Dorsolateral prefrontal cortex (tissue), 120 donors: ENCODE measurements at regions of chr18 and their contacts with region 1.

Region 1: DNA sequence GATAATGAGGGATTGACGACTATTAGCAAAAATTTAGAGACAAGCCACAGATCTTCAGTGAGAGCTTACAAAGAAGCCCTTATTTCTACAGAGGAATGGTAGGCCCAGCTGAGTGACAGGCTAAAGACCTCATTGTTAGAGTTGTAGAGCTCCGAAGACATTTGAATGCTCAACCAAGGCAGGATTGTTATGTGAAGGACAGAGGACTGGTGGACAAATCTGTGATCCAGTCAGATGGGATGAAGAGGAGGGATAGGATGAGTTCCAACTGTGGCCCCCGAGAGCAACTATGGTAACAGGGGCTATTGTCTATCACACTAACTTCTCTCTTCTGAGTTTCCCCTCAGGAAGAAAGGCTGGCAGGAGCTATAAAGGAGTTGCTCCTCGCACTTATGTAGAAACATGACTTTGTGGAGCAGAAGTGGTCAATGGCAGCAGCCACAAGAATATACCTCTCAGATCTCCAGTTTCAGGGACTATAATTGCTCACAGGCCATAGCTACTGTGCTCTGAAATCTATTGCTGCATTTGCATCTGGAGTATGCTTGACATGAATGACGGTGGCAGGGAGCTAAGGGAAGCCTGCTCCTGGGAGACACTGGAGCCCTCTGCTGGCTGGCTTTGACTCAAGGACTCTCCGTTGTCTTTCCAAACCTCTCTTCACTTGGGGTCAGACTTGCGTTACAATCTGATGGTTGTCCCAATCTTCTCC is 50.3 kb upstream of the GREB1L start:
- DNase-seq: peak; percentile 10 to 85 (median 68)
- H3K4me3 ChIP-seq: peak overlapping the region in 12 of 59 donors; percentile 1 to 40 (median 22)
- H3K27ac ChIP-seq: peak overlapping the region in 56 of 59 donors; percentile 25 to 94 (median 82)
- H3K27me3 ChIP-seq: no peaks in the 10 kb centered on the region
- CTCF ChIP-seq: peak in 55 of 56 donors; percentile 21 to 79 (median 62)

Region 2: DNA sequence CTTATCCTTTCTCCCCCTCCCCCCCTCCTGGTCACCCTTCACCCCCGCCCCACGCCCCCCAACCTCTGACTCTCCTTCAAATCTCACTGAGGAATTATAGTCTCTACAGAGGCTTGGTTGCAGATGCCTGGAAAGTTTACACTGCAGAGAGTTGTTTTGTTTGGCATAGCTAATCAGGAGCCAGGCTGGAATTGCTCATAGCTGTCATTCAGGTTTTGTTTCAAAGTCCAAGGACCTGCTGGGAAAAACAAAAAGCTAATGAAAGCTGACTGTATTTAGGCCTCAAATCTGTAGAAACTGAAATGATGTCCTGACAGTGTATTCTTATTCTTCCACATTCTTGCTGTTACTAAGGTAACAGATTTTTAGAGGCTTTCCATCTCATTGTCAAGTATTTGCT is 72.9 kb after region 1 on chr18:
- intact Hi-C with region 1: loop called in 1 of 2 experiments (anchors 2 kb)
- DNase-seq: no peak
- H3K4me3 ChIP-seq: peak overlapping the region in 1 of 59 donors; percentile 6
- H3K27ac ChIP-seq: peak overlapping the region in 22 of 59 donors; percentile 10 to 82 (median 40)
- H3K27me3 ChIP-seq: peaks cover 0 to 4% (median 0%) of the 10 kb centered on the region in 45 donors
- CTCF ChIP-seq: no peak

Region 3: GRCh38 chr18:21444465-21445023 is 252.8 kb after region 1 on chr18:
- intact Hi-C with region 1: loop called (anchors 1 to 2 kb)
- DNase-seq: peak in 2 of 10 donors; percentile 28 to 33
- H3K4me3 ChIP-seq: no peak overlapping the region
- H3K27ac ChIP-seq: no peak overlapping the region
- H3K27me3 ChIP-seq: peaks cover 0 to 5% (median 0%) of the 10 kb centered on the region in 45 donors
- CTCF ChIP-seq: peak; percentile 35 to 88 (median 71)

Region 4: DNA sequence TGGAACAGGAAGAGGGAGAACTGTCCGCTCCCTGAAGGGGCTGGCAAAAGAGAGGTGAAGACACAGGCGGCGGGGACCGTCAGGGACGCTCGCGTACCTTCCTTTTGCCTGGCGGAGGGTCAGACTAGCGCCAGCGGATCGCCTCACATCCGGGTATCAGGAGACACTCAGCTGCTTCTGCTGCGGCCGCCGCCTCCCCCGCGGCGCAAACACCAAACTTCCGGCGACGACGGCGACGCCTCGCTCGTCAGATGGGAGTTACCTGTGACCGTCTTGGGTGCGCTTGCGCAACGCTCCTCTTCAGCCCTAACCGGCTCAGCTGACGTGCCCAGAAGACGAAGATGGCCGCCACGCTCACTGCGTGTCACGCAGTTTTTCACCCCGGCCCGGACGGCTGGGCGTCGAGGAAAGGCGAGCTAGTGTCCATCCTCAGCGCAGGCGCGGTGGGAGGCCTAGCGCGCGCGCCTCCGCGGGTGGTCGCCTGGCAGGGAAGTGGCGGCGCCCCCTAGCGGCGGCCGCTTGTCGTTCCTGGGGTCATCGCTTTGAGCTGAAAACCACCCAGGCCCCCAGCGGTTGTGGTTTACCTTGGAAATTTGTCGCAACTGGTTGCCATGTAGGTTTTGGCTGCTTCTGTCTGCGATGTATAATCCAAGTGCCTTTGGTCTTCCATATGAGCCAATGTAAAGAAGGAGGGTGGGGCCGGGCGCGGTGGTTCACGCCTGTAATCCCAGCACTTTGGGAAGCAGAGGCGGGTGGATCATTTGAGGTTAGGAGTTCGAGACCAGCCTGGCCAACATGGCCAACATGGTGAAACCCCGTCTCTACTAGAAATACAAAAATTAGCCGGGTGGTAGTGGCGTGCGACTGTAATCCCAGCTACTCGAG is 409.0 kb after region 1 on chr18 and contains the start of gene ESCO1:
- intact Hi-C with region 1: loop called in 1 of 2 experiments (anchors 5 kb)
- DNase-seq: peak; percentile 81 to 96 (median 91)
- H3K4me3 ChIP-seq: peak within 1 kb of the TSS; percentile 63 to 100 (median 96)
- H3K27ac ChIP-seq: peak within 1 kb of the TSS; percentile 25 to 99 (median 93)
- H3K27me3 ChIP-seq: no peaks in the 10 kb centered on the region
- CTCF ChIP-seq: peak; percentile 85 to 99 (median 96)
- total RNA-seq, gene ESCO1: 13.0 to 29.8 (median 18.0) TPM

Region 5: GRCh38 chr18:21704603-21705364 is 513.0 kb after region 1 on chr18 and contains the start of gene ABHD3:
- intact Hi-C with region 1: loop called in 1 of 2 experiments (anchors 10 kb)
- DNase-seq: peak; percentile 79 to 95 (median 88)
- H3K4me3 ChIP-seq: peak within 1 kb of the TSS; percentile 54 to 96 (median 87)
- H3K27ac ChIP-seq: peak within 1 kb of the TSS; percentile 57 to 99 (median 92)
- H3K27me3 ChIP-seq: no peaks in the 10 kb centered on the region
- CTCF ChIP-seq: peak in 50 of 56 donors; percentile 14 to 58 (median 39)
- total RNA-seq, gene ABHD3: 7.1 to 49.7 (median 14.0) TPM

Region 6: GRCh38 chr18:21955757-21956652 is 764.3 kb after region 1 on chr18:
- intact Hi-C with region 1: loop called in 1 of 2 experiments (anchors 5 kb)
- DNase-seq: peak; percentile 58 to 83 (median 68)
- H3K4me3 ChIP-seq: no peak overlapping the region
- H3K27ac ChIP-seq: no peak overlapping the region
- H3K27me3 ChIP-seq: peaks cover 0 to 5% (median 0%) of the 10 kb centered on the region in 45 donors
- CTCF ChIP-seq: peak; percentile 55 to 94 (median 86)